MCF 10A (cell line): ENCODE measurements at regions of chr16 and their contacts with region 1.

Region 1: GRCh38 chr16:87461466-87461991 is 31.3 kb downstream of the ZCCHC14 start:
- DNase-seq: peak; percentile 95
- H3K4me3 Mint-ChIP-seq: peak overlapping the region; percentile 57
- H3K27ac Mint-ChIP-seq: no peak overlapping the region
- H3K4me1 Mint-ChIP-seq: peaks cover 31% of the 10 kb centered on the region
- H3K27me3 Mint-ChIP-seq: no peaks in the 10 kb centered on the region
- CTCF ChIP-seq: peak; percentile 37

Region 2: DNA sequence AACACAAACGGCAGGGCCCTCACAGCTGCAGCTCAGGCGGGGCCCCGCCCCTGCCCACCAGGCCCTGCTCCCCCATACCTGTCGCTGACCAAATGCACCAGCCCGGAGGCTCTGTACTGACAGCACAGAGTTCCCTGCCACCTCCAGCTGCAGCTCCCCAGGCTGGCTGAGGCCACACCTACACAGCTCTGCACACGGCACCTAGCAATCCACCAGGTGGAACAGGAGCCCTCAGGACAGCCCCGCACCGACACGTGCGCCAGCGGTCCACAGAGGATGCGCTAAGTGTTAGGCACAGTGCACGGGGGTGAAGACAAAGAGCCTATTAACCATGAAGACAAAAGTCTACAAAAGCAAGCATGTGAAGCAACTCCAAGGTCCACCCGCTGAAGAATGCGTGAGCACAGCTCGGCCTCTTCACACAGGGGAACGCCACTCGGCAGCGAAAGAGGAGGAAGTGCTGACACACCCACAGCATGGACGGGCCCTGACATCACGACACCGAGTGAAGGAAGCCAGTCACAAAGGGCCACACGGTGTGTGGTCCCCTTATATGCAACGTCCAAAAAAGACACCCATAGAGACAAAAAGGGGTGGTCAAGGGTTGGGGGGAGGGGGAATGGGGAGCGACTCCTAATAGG is 26.0 kb after region 1 on chr16:
- CTCF ChIA-PET with region 1: interaction called, 22 read pairs
- POLR2A ChIA-PET with region 1: interaction called, 144 read pairs
- intact Hi-C with region 1: loop called (anchors 1 kb)
- DNase-seq: peak; percentile 73
- H3K4me3 Mint-ChIP-seq: peak overlapping the region; percentile 74
- H3K27ac Mint-ChIP-seq: peak overlapping the region; percentile 25
- H3K4me1 Mint-ChIP-seq: peaks cover 65% of the 10 kb centered on the region
- H3K27me3 Mint-ChIP-seq: no peaks in the 10 kb centered on the region
- CTCF ChIP-seq: no peak

Region 3: DNA sequence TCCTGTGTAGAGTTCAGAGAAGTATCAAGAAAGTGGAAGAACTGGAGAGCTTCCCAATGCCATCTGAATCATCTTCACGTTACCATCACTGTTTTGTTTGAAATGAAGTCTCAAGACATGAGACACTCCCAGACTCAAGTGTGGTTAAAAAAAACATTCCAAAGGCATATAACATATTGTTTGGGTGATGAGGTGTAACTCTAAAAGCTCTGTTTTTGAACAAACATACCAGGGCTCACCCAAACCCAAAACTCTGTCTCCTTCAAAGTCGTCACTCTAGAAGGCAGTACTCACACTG is 37.6 kb after region 1 on chr16:
- CTCF ChIA-PET with region 1: interaction called, 9 read pairs
- POLR2A ChIA-PET with region 1: interaction called, 11 read pairs
- intact Hi-C with region 1: no loop called
- DNase-seq: peak; percentile 67
- H3K4me3 Mint-ChIP-seq: no peak overlapping the region
- H3K27ac Mint-ChIP-seq: peak overlapping the region; percentile 72
- H3K4me1 Mint-ChIP-seq: peaks cover 18% of the 10 kb centered on the region
- H3K27me3 Mint-ChIP-seq: no peaks in the 10 kb centered on the region
- CTCF ChIP-seq: no peak

Region 4: DNA sequence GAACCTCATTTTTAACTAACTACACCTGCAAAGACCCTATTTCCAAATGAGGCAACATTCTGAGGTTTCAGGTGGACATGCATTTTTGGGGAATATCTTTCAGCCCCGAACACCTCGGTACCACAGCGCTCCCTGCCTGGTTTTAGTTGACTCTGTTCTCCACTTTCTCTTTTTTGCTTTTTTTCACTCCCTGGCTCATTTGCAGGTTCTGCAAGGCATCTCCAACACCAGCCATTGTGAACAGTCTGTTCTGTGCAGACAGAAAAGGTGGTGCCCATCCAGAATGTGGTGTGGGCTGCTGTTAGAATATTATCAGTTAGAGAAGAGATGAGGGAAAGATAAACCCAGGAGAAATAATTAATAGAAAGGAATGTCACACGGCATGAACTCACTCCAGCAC is 63.8 kb after region 1 on chr16:
- CTCF ChIA-PET with region 1: no interaction called
- POLR2A ChIA-PET with region 1: no interaction called
- intact Hi-C with region 1: no loop called
- DNase-seq: no peak
- H3K4me3 Mint-ChIP-seq: no peak overlapping the region
- H3K27ac Mint-ChIP-seq: no peak overlapping the region
- H3K4me1 Mint-ChIP-seq: peaks cover 8% of the 10 kb centered on the region
- H3K27me3 Mint-ChIP-seq: peaks cover 10% of the 10 kb centered on the region
- CTCF ChIP-seq: no peak

Region 5: DNA sequence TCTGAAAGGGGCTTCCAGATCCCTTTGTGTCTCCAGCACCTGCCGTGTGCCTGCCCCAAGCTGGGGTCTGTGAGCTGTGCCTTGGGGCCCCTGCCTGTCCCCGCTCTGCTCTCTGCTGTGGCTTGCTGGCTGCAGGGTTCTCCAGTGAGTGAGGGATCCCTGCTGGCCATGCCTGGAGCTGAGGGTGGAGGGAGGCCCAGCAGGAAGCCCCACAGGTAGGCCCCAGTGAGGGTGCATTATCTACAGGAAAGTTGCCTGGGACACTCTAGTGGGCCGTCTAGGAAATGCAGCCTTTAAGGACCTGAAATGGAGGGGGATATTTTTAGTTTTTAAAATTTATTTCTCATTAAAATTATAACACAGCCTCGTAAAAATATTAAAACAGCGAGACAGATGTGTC is 191.7 kb after region 1 on chr16:
- CTCF ChIA-PET with region 1: no interaction called
- POLR2A ChIA-PET with region 1: no interaction called
- intact Hi-C with region 1: no loop called
- DNase-seq: no peak
- H3K4me3 Mint-ChIP-seq: no peak overlapping the region
- H3K27ac Mint-ChIP-seq: no peak overlapping the region
- H3K4me1 Mint-ChIP-seq: no peaks in the 10 kb centered on the region
- H3K27me3 Mint-ChIP-seq: peaks cover 52% of the 10 kb centered on the region
- CTCF ChIP-seq: peak; percentile 36